MCF 10A (cell line): ENCODE measurements at regions of chr21 and their contacts with region 1.

Region 1: DNA sequence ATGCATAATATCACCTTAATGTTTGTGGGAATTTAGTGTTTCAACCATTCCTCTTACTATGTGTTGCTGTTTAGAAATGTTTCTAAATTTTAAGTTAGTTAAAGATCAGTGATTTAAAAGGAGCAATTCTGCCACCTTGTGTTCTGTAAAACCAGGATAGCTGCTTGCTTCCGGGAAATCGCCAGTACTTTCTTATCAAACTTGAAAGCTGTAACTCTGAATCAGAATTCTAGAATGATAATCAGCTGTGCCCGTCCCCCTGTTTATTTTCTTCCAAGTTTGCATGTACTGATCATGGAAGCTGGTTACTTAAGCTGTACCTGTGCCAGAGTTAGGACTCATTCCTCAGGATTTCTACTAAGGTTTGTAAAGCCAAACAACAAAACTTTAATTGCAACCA is 656.4 kb downstream of the LTN1 start:
- DNase-seq: peak; percentile 47
- H3K4me3 Mint-ChIP-seq: no peak overlapping the region
- H3K27ac Mint-ChIP-seq: no peak overlapping the region
- H3K4me1 Mint-ChIP-seq: peaks cover 6% of the 10 kb centered on the region
- H3K27me3 Mint-ChIP-seq: no peaks in the 10 kb centered on the region
- CTCF ChIP-seq: peak; percentile 46

Region 2: DNA sequence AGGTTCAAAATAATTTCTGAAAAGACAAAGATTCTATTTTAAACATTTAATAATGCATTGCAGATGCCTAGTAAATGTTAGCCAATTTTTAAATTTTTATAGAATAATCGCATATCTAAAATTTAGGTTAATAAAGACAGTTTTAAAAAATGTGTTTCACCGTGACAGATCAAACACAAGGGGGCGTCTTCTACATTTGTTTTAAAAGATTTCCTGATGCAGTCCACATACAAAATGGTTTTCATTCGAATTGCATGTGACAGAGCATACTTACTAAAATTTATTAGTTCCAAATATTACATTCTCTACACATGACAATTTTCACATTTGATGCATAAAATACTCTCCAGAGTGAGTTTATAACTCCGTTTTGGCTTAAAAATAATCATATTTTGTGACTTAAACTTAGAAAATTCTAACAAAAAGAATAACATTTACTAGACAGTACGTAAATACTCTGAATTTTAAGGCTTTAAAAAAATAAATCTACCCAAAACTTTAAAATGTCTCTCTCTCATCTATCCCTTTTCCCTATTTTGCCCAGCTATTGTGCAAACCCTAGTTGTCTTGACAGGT is 1566.6 kb before region 1 on chr21:
- CTCF ChIA-PET with region 1: no interaction called
- POLR2A ChIA-PET with region 1: no interaction called
- intact Hi-C with region 1: loop called (anchors 5 kb)
- DNase-seq: peak; percentile 48
- H3K4me3 Mint-ChIP-seq: no peak overlapping the region
- H3K27ac Mint-ChIP-seq: no peak overlapping the region
- H3K4me1 Mint-ChIP-seq: no peaks in the 10 kb centered on the region
- H3K27me3 Mint-ChIP-seq: no peaks in the 10 kb centered on the region
- CTCF ChIP-seq: peak; percentile 46

Region 3: GRCh38 chr21:26850108-26850643 is 1486.1 kb before region 1 on chr21:
- CTCF ChIA-PET with region 1: interaction called, 18 read pairs
- POLR2A ChIA-PET with region 1: no interaction called
- intact Hi-C with region 1: loop called (anchors 1 kb)
- DNase-seq: peak; percentile 52
- H3K4me3 Mint-ChIP-seq: no peak overlapping the region
- H3K27ac Mint-ChIP-seq: no peak overlapping the region
- H3K4me1 Mint-ChIP-seq: peaks cover 18% of the 10 kb centered on the region
- H3K27me3 Mint-ChIP-seq: peaks cover 29% of the 10 kb centered on the region
- CTCF ChIP-seq: peak; percentile 70

Region 4: DNA sequence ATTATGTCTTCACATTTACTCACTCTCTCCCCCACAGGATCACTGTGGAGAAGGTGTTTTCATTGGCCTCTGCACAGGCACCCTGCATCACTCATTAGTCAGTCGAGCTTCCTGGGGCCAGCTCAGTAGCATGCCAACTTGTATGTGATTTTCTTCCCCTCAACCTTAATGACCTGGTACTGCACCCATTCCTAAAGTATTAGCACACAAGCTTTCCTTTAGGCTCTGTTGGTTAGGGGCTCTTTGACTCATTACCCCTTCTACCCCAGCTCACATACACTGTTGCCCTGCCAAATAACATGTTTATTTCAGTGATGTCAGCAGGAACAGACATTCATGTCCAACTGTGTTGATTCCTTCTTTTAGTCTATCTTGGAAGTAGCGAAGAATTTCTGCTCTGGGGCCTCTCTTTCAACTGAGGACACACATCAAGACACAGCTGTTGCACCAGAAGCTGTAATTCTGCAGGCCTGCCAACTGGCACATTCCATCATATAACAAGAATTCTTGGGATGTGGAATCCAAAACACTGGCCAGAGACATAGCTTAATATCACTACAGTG is 765.9 kb before region 1 on chr21:
- CTCF ChIA-PET with region 1: interaction called, 8 read pairs
- POLR2A ChIA-PET with region 1: no interaction called
- intact Hi-C with region 1: loop called (anchors 2 kb)
- DNase-seq: peak; percentile 83
- H3K4me3 Mint-ChIP-seq: no peak overlapping the region
- H3K27ac Mint-ChIP-seq: peak overlapping the region; percentile 85
- H3K4me1 Mint-ChIP-seq: peaks cover 37% of the 10 kb centered on the region
- H3K27me3 Mint-ChIP-seq: no peaks in the 10 kb centered on the region
- CTCF ChIP-seq: no peak

Region 5: GRCh38 chr21:27715131-27715530 is 621.2 kb before region 1 on chr21:
- CTCF ChIA-PET with region 1: interaction called, 7 read pairs
- POLR2A ChIA-PET with region 1: no interaction called
- intact Hi-C with region 1: loop called (anchors 5 kb)
- DNase-seq: no peak
- H3K4me3 Mint-ChIP-seq: no peak overlapping the region
- H3K27ac Mint-ChIP-seq: no peak overlapping the region
- H3K4me1 Mint-ChIP-seq: peaks cover 10% of the 10 kb centered on the region
- H3K27me3 Mint-ChIP-seq: no peaks in the 10 kb centered on the region
- CTCF ChIP-seq: no peak

Region 6: GRCh38 chr21:28325618-28326017 is 10.7 kb before region 1 on chr21:
- CTCF ChIA-PET with region 1: interaction called, 12 read pairs
- POLR2A ChIA-PET with region 1: no interaction called
- intact Hi-C with region 1: no loop called
- DNase-seq: peak; percentile 55
- H3K4me3 Mint-ChIP-seq: no peak overlapping the region
- H3K27ac Mint-ChIP-seq: no peak overlapping the region
- H3K4me1 Mint-ChIP-seq: peaks cover 9% of the 10 kb centered on the region
- H3K27me3 Mint-ChIP-seq: no peaks in the 10 kb centered on the region
- CTCF ChIP-seq: no peak